Transverse colon (tissue), 4 donors: ENCODE measurements at regions of chr13 and their contacts with region 1.

Region 1: GRCh38 chr13:23020223-23020843 is 160.4 kb upstream of the SGCG start:
- DNase-seq: peak; percentile 42
- H3K4me3 ChIP-seq: no peak overlapping the region
- H3K27ac ChIP-seq: no peak overlapping the region
- H3K4me1 ChIP-seq: no peaks in the 10 kb centered on the region
- H3K27me3 ChIP-seq: no peaks in the 10 kb centered on the region
- CTCF ChIP-seq: peak; percentile 61 to 84 (median 80)
- EP300 ChIP-seq: no peak
- POLR2A ChIP-seq: no peak

Region 2: DNA sequence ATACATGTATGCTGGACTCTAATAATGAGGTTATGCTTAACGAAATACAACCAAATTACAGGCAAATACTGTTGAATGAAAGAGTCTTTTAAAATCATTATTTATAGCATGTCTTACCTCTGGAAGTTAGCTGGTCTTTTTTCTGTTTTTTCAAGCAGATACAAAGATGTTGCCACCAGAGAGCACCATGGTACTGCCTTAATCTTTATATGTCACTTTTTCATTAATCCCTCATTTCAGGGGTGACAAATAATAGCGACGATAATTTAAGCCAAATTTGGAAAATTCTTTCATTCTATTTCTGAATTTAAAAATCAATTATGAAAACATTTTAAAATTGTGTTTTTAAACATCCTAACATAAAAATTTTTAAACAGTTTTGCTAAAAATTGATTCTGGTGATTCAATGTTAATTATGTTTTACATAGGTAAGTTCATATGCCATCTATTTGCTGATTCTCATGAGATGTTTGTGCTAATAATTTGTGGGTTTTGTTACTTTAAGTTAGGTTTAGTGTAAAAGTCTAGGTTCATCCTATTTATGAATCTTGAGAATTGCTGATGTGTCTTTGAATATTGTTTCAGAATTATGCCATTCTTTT is 218.8 kb before region 1 on chr13:
- in situ Hi-C with region 1: loop called (anchors 10 to 25 kb)
- intact Hi-C with region 1: loop called (anchors 5 kb)
- DNase-seq: no peak
- H3K4me3 ChIP-seq: no peak overlapping the region
- H3K27ac ChIP-seq: no peak overlapping the region
- H3K4me1 ChIP-seq: no peaks in the 10 kb centered on the region
- H3K27me3 ChIP-seq: peaks cover 3% of the 10 kb centered on the region
- CTCF ChIP-seq: peak in 4 of 5 experiments; percentile 24 to 28 (median 28)
- EP300 ChIP-seq: no peak
- POLR2A ChIP-seq: no peak